Activated CD4-positive, alpha-beta memory T cell treated with anti-CD3 and anti-CD28 coated beads, Interleukin-2, amount 10 ng/mL, durations not matched to agents 7 days and 5 days (primary cell): ENCODE measurements at regions of chr15 and their contacts with region 1.

Region 1: DNA sequence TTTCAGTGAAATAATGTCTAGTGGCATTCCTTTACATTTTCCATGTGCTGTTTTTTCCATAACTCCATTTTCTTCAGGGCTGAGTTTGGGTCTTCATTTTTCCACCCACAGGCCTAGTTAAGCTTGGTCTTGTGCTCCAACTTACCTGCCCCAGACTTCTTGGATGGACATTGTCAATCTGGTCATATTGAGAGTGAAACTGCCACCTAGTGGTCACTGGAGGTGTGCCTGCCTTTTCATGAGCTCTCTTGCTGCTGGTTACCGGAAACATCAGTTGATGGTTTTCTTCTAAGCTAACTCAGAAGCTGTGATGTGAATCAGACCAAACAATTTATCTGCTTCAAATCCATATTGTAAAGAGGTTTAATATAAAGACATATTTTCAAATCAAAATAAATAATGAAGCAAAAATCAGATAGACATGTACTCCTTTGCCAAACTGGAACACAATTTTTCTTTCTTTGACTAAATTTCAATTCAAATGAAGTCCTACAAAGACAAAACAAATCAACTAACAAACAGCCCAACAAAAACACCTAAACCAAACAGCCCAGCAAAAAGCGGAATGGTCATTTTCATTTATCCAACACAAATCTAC is 135.1 kb upstream of the RASGRP1 start:
- DNase-seq: peak; percentile 83
- H3K4me3 Mint-ChIP-seq: peak overlapping the region; percentile 93
- H3K27ac Mint-ChIP-seq: peak overlapping the region; percentile 97
- H3K4me1 Mint-ChIP-seq: peaks cover 80% of the 10 kb centered on the region
- H3K27me3 Mint-ChIP-seq: no peaks in the 10 kb centered on the region

Region 2: DNA sequence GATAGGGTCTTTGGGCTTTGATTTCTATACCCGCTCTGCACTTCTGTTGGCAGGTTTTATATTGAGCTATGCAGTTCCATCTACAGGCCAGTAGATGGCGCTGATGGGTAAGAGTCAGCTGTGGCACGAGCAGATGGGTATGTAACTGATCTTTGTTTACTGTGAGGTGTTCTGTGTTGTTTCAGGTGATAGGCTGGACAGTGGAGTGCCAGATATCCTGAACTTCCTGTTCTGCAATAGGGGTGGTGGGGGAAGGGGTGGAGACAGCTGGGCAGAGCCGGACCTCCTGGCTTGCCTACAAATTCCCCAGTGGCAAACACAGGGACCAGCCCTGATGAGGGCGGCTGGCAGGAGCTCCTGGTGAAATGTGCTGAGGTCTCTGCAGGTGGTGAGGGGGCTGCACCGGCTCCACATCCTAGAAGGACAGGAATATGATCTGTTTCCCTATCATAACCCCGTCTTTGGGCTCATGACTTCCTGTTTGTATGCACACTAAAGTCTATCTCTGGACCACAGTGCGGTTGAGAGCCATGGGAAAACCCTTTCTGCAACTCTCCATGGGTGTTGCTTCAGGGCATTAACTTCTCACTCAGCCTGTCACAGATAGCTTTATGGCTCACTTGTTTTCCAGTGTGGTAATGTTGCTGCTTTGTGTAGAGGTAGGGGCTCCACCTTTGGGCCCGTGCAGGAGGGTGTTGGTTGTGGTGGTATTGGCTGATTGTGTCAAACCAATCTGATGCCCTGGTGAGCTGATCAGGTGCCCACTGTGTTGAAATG is 259.2 kb before region 1 on chr15:
- CTCF ChIA-PET with region 1: interaction called, 139 read pairs
- POLR2A ChIA-PET with region 1: interaction called, 10 read pairs
- DNase-seq: peak; percentile 60
- H3K4me3 Mint-ChIP-seq: no peak overlapping the region
- H3K27ac Mint-ChIP-seq: no peak overlapping the region
- H3K4me1 Mint-ChIP-seq: peaks cover 11% of the 10 kb centered on the region
- H3K27me3 Mint-ChIP-seq: peaks cover 41% of the 10 kb centered on the region

Region 3: DNA sequence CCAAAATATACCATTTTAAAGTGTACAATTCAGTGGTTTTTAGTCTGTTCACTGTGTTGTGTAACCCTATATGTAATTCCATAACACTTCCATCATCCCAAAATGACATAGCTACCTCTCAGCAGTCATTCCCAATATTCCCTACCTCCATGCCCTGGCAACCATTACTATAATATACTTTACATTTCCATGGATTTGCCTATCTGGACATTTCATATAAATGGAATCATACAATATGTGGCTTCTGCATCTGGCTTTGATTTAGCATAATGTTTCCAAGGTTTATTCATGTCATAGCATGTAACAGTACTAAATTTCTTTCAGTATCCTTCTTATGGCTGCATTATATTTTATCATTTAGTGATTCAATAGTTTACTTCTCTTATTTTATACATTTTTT is 220.5 kb before region 1 on chr15:
- CTCF ChIA-PET with region 1: interaction called, 79 read pairs
- POLR2A ChIA-PET with region 1: interaction called, 56 read pairs
- DNase-seq: no peak
- H3K4me3 Mint-ChIP-seq: no peak overlapping the region
- H3K27ac Mint-ChIP-seq: no peak overlapping the region
- H3K4me1 Mint-ChIP-seq: peaks cover 17% of the 10 kb centered on the region
- H3K27me3 Mint-ChIP-seq: no peaks in the 10 kb centered on the region

Region 4: GRCh38 chr15:38504680-38505467 is 194.9 kb before region 1 on chr15:
- CTCF ChIA-PET with region 1: interaction called, 19 read pairs
- POLR2A ChIA-PET with region 1: interaction called, 10 read pairs
- DNase-seq: no peak
- H3K4me3 Mint-ChIP-seq: no peak overlapping the region
- H3K27ac Mint-ChIP-seq: peak overlapping the region; percentile 11
- H3K4me1 Mint-ChIP-seq: peaks cover 29% of the 10 kb centered on the region
- H3K27me3 Mint-ChIP-seq: no peaks in the 10 kb centered on the region

Region 5: DNA sequence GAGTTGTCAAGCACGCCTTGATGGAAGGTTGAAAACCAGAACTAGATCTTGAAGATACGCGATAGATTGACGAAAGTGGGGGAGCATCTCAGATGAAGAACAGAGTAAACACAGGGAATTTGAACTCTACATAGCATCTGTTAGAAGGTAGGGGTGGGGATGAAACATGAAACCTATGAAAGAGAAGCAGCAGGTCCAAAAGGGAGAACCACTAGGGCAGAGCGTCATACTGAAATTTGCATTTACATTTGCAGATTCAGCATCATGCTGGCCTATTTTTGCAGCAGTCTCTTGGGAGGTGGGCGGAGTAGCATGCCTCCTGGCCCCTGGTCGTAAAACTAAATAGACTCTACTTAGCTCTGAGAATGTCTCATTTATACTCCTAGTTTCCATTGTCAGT is 89.0 kb before region 1 on chr15:
- CTCF ChIA-PET with region 1: interaction called, 11 read pairs
- POLR2A ChIA-PET with region 1: interaction called, 42 read pairs
- DNase-seq: peak; percentile 65
- H3K4me3 Mint-ChIP-seq: peak overlapping the region; percentile 61
- H3K27ac Mint-ChIP-seq: peak overlapping the region; percentile 99
- H3K4me1 Mint-ChIP-seq: peaks cover 71% of the 10 kb centered on the region
- H3K27me3 Mint-ChIP-seq: no peaks in the 10 kb centered on the region

Region 6: GRCh38 chr15:38671675-38672254 is 28.0 kb before region 1 on chr15:
- CTCF ChIA-PET with region 1: interaction called, 17 read pairs
- POLR2A ChIA-PET with region 1: interaction called, 55 read pairs
- DNase-seq: peak; percentile 52
- H3K4me3 Mint-ChIP-seq: peak overlapping the region; percentile 56
- H3K27ac Mint-ChIP-seq: peak overlapping the region; percentile 97
- H3K4me1 Mint-ChIP-seq: peaks cover 81% of the 10 kb centered on the region
- H3K27me3 Mint-ChIP-seq: no peaks in the 10 kb centered on the region